HepG2 (cell line): ENCODE measurements at regions of chr12 and their contacts with region 1.

Region 1: GRCh38 chr12:111405149-111405860 is 418 bp upstream of the SH2B3 start:
- DNase-seq: peak; percentile 95
- ATAC-seq: peak; percentile 83
- H3K4me3 ChIP-seq: peak overlapping the region; percentile 92 to 95 (median 93)
- H3K27ac ChIP-seq: peak overlapping the region; percentile 68
- H3K4me1 ChIP-seq: peaks cover 59% of the 10 kb centered on the region
- H3K27me3 ChIP-seq: no peaks in the 10 kb centered on the region; a peak in 1 of 5 replicates
- CTCF ChIP-seq: peak; percentile 96
- EP300 ChIP-seq: no peak
- POLR2A ChIP-seq: peak; percentile 52 to 78
- RAD21 ChIP-seq: peak; percentile 61; the same call in 1 of the 2 replicates

Region 2: GRCh38 chr12:111368788-111369495 is 36.4 kb before region 1 on chr12 and contains the start of gene PHETA1:
- CTCF ChIA-PET with region 1: no interaction called
- POLR2A ChIA-PET with region 1: interaction called, 21 read pairs
- in situ Hi-C with region 1: no loop called
- intact Hi-C with region 1: no loop called
- DNase-seq: peak; percentile 82
- ATAC-seq: peak; percentile 86
- H3K4me3 ChIP-seq: peak within 1 kb of the TSS; percentile 84 to 97 (median 95)
- H3K27ac ChIP-seq: peak within 1 kb of the TSS; percentile 72
- H3K4me1 ChIP-seq: peaks cover 37% of the 10 kb centered on the region
- H3K27me3 ChIP-seq: no peaks in the 10 kb centered on the region
- CTCF ChIP-seq: no peak
- EP300 ChIP-seq: peak in 1 of 2 experiments; percentile 4; a peak in 1 of 4 replicates
- POLR2A ChIP-seq: peak in 1 of 2 experiments; percentile 91; a peak in 2 of 4 replicates
- RAD21 ChIP-seq: peak; percentile 40; the same call in 1 of the 2 replicates
- total RNA-seq, gene PHETA1: 12.7 and 20.8 TPM in 2 replicates